ENCODE measurements at regions of chr2 and their contacts with region 1.

Region 1: GRCh38 chr2:37231241-37232130 is at the starts of genes CEBPZ and NDUFAF7:
- DNase-seq: peak; percentile 88
- H3K4me3 Mint-ChIP-seq: no peak within 1 kb of the TSS
- H3K27ac Mint-ChIP-seq: no peak within 1 kb of the TSS
- H3K4me1 Mint-ChIP-seq: peaks cover 9% of the 10 kb centered on the region
- H3K27me3 Mint-ChIP-seq: no peaks in the 10 kb centered on the region
- CTCF ChIP-seq: no peak
- total RNA-seq, gene CEBPZ: 60.7 and 64.9 TPM in 2 replicates
- total RNA-seq, gene NDUFAF7: 20.4 and 22.3 TPM in 2 replicates

Region 2: GRCh38 chr2:37149626-37150322 is 81.7 kb before region 1 on chr2:
- CTCF ChIA-PET with region 1: no interaction called
- intact Hi-C with region 1: loop called (anchors 5 kb)
- DNase-seq: no peak
- H3K4me3 Mint-ChIP-seq: peak overlapping the region; percentile 59
- H3K27ac Mint-ChIP-seq: peak overlapping the region; percentile 60
- H3K4me1 Mint-ChIP-seq: peaks cover 51% of the 10 kb centered on the region
- H3K27me3 Mint-ChIP-seq: no peaks in the 10 kb centered on the region
- CTCF ChIP-seq: no peak

Measured in Calu3 (cell line).